ENCODE measurements at regions of chr14 and their contacts with region 1.

Region 1: DNA sequence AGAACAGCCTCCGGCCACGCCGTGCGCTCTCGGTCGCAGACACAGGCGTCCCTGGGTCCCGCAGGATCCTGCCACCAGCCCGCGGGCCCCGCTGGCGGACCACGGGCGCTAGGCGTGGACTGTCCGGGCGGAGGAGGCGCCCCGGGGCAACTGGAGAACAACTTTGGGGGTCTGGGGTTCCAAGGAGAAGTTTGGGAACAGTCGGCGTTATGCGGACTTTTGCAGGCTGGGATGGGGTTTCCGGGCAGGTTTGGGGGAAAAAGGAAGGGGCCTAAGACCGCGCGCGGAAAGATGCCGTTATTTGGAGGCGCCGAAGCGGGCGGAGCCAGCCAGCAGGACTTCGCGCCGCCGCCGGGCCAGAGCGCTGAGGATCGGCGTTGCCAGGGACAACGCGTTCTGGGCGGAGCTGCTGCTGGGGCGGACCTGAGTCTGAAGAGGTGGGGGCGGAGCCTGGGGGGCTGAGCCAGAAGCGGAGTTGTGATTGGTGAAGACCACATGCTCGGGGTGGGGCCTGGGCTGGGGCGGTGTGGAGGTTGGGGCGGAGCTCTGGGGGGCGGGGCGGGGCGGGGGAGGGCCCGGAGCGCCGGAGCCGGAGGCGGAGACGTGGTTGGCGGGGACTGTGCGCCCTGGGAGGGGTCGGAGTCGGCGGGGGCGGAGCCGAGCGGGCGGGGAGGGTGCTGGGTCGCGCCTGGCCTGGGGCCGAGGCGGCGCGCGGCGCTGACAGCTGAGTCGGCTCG is at the start of gene CYP46A1:
- DNase-seq: peak; percentile 100
- ATAC-seq: peak; percentile 92
- H3K4me3 Mint-ChIP-seq: peak within 1 kb of the TSS; percentile 79
- H3K27ac Mint-ChIP-seq: no peak within 1 kb of the TSS
- H3K4me1 Mint-ChIP-seq: peaks cover 26% of the 10 kb centered on the region
- H3K27me3 Mint-ChIP-seq: peaks cover 7% of the 10 kb centered on the region
- CTCF ChIP-seq: no peak
- total RNA-seq, gene CYP46A1: 0.57 to 0.77 TPM (median 0.73 TPM) in 3 replicates

Region 2: GRCh38 chr14:99664058-99664936 is 19.5 kb before region 1 on chr14:
- CTCF ChIA-PET with region 1: interaction called, 13 read pairs
- POLR2A ChIA-PET with region 1: no interaction called
- DNase-seq: peak; percentile 70
- ATAC-seq: peak; percentile 70
- H3K4me3 Mint-ChIP-seq: no peak overlapping the region; the same call in 1 of the 2 replicates
- H3K27ac Mint-ChIP-seq: peak overlapping the region; percentile 26
- H3K4me1 Mint-ChIP-seq: peaks cover 45% of the 10 kb centered on the region
- H3K27me3 Mint-ChIP-seq: peaks cover 23% of the 10 kb centered on the region
- CTCF ChIP-seq: no peak

Region 3: DNA sequence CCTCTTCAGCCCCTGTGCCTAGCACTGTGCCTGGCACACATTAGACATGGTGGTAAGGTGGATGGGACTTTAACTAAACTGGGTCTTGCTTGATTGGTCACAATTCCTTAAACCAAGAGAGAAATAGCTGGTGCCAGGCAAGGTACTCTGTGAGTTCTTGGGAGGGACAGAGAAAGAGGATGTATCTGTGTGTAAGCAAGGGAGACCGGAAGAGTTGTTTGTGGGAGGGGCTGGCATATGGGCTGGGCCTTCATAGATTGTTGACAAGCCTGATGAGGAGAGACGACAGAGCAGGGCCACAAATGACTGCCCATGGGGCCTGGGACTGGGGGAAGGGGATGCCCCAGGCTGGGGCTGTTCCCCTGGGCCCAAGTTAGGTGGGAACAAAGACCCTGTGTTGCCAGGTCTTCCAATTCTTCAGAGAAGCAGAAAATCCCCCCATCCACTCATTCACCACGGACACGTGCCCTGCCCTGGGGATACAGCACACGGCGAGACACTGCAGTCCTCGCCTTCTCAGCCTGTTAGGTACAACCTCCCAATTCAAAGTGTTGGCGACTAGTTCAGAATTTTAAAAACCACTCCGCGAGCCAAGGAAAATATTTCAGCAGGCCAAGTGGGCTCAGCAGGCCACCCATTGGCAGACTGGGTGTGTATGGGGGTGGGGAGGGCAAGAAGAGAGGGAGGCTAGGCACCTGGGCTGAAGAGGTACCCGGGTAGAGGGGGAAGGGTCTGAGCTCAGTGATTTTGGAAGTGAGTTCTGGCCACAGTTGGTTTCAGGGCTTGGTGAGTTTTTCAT is 11.1 kb before region 1 on chr14:
- CTCF ChIA-PET with region 1: interaction called, 13 read pairs
- POLR2A ChIA-PET with region 1: no interaction called
- DNase-seq: no peak
- ATAC-seq: peak; percentile 27
- H3K4me3 Mint-ChIP-seq: no peak overlapping the region
- H3K27ac Mint-ChIP-seq: peak overlapping the region; percentile 19; the same call in 1 of the 2 replicates
- H3K4me1 Mint-ChIP-seq: peaks cover 35% of the 10 kb centered on the region
- H3K27me3 Mint-ChIP-seq: peaks cover 3% of the 10 kb centered on the region; the same call in 1 of the 2 replicates
- CTCF ChIP-seq: no peak

Region 4: GRCh38 chr14:99698642-99699041 is 14.9 kb after region 1 on chr14:
- CTCF ChIA-PET with region 1: interaction called, 16 read pairs
- POLR2A ChIA-PET with region 1: no interaction called
- DNase-seq: no peak
- ATAC-seq: no peak
- H3K4me3 Mint-ChIP-seq: no peak overlapping the region
- H3K27ac Mint-ChIP-seq: no peak overlapping the region
- H3K4me1 Mint-ChIP-seq: no peaks in the 10 kb centered on the region
- H3K27me3 Mint-ChIP-seq: peaks cover 3% of the 10 kb centered on the region; the same call in 1 of the 2 replicates
- CTCF ChIP-seq: no peak

Region 5: DNA sequence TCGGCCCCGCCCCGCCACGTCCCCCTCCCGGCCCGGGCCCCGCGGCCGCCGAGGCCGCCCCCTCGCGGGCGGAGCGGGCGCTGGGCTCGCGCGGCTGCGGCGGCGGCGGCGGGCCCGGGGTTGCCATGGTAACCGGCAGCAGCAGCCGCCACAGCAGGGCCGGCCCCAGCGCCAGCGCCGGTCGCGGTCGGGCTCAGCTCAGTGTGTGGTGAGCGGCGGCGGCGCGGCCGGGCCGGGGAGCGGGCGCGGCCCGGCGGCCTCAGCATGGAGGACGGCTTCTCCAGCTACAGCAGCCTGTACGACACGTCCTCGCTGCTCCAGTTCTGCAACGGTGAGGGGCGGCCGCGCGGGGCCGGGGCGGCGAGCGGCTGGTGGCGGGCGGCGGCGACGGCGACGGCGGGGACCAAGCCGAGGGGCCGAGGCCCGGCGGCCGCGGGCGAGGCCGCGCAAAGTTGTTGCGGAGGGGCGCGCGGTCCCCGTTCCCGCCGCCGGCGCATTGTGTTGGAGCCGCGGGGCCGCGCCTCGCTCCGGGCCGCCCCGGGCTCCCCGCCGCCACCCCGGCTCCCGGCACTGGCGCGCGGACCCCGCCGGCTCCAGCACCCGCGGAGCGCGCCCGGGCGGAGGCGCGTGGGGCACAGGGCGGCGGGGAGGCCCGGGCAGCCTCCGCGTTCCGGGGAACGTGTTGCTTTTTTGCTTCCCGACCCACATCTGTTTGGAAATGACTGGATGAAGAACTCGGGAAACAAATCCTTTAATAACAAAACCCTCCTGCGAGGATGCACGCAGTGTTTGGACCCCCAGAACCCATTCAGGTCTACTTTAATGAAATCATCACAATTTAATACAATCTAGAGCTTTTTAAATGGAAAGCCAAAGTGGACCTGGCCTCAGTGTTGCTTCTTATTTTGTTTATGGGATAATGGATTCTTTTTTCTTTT is 109.7 kb after region 1 on chr14 and contains the start of gene EML1:
- CTCF ChIA-PET with region 1: interaction called, 11 read pairs
- POLR2A ChIA-PET with region 1: no interaction called
- DNase-seq: peak; percentile 83
- ATAC-seq: peak; percentile 90
- H3K4me3 Mint-ChIP-seq: peak within 1 kb of the TSS; percentile 74
- H3K27ac Mint-ChIP-seq: no peak within 1 kb of the TSS
- H3K4me1 Mint-ChIP-seq: peaks cover 22% of the 10 kb centered on the region
- H3K27me3 Mint-ChIP-seq: peaks cover 20% of the 10 kb centered on the region
- CTCF ChIP-seq: no peak
- total RNA-seq, gene EML1: 10.9 to 16.1 TPM (median 11.4 TPM) in 3 replicates